Activated naive CD4-positive, alpha-beta T cell treated with anti-CD3 and anti-CD28 coated beads for 36 hours (primary cell): ENCODE measurements at regions of chrX and their contacts with region 1.

Region 1: GRCh38 chrX:14029425-14030173 is at the start of gene GEMIN8:
- DNase-seq: peak; percentile 82
- H3K4me3 Mint-ChIP-seq: peak within 1 kb of the TSS; percentile 98
- H3K27ac Mint-ChIP-seq: peak within 1 kb of the TSS; percentile 99
- H3K4me1 Mint-ChIP-seq: peaks cover 30% of the 10 kb centered on the region
- H3K27me3 Mint-ChIP-seq: no peaks in the 10 kb centered on the region
- total RNA-seq, gene GEMIN8: 4.7 to 5.1 TPM

Region 2: GRCh38 chrX:12843668-12844279 is 1185.8 kb before region 1 on chrX:
- CTCF ChIA-PET with region 1: no interaction called
- intact Hi-C with region 1: loop called (anchors 2 kb)
- DNase-seq: no peak
- H3K4me3 Mint-ChIP-seq: peak overlapping the region; percentile 65
- H3K27ac Mint-ChIP-seq: peak overlapping the region; percentile 93
- H3K4me1 Mint-ChIP-seq: peaks cover 17% of the 10 kb centered on the region
- H3K27me3 Mint-ChIP-seq: no peaks in the 10 kb centered on the region

Region 3: GRCh38 chrX:13087322-13088155 is 942.1 kb before region 1 on chrX:
- CTCF ChIA-PET with region 1: no interaction called
- intact Hi-C with region 1: loop called (anchors 5 kb)
- DNase-seq: peak; percentile 74
- H3K4me3 Mint-ChIP-seq: peak overlapping the region; percentile 79
- H3K27ac Mint-ChIP-seq: peak overlapping the region; percentile 97
- H3K4me1 Mint-ChIP-seq: peaks cover 87% of the 10 kb centered on the region
- H3K27me3 Mint-ChIP-seq: no peaks in the 10 kb centered on the region

Region 4: DNA sequence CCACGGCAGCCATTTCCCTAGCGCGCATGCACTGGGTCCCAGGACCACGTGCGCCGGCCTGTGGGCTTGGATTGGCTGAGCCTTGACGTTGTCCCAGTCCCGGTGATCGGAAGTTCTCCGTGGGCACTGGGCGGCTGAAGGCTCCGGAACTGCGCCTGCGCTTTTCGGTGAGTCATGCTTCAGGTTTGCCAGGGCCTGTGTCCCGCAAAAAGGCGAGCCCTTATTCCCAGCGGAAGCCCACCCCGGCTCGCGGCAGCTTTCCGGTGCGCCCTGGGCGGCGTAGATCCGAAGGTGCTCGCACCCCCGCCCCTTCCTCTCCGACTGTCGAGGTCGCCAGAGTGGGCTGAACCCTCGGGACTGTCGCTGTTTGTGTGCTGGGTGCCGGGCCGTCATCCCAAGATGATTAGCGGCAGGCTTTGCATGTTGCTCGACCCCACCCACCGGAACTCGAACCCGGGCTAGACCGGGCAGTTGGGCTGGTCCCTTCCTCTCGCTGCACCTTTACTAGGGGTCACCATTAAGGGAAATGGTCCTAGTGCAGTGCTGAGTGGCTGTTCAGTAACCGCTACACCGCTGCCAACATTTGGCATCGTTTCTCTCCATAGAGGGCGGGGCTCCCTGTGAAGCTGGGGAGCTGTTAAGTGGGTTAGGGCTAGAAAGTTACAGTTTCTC is 376.4 kb before region 1 on chrX and contains the start of gene TCEANC:
- CTCF ChIA-PET with region 1: no interaction called
- intact Hi-C with region 1: loop called (anchors 1 kb)
- DNase-seq: peak; percentile 95
- H3K4me3 Mint-ChIP-seq: peak within 1 kb of the TSS; percentile 88
- H3K27ac Mint-ChIP-seq: peak within 1 kb of the TSS; percentile 93
- H3K4me1 Mint-ChIP-seq: peaks cover 24% of the 10 kb centered on the region
- H3K27me3 Mint-ChIP-seq: no peaks in the 10 kb centered on the region
- total RNA-seq, gene TCEANC: 2.5 to 2.7 TPM

Region 5: GRCh38 chrX:13734278-13735172 is 295.1 kb before region 1 on chrX and contains the starts of genes OFD1 and TRAPPC2:
- CTCF ChIA-PET with region 1: interaction called, 3 read pairs
- intact Hi-C with region 1: loop called (anchors 1 kb)
- DNase-seq: peak; percentile 92
- H3K4me3 Mint-ChIP-seq: peak within 1 kb of the TSS; percentile 95
- H3K27ac Mint-ChIP-seq: peak within 1 kb of the TSS; percentile 92
- H3K4me1 Mint-ChIP-seq: peaks cover 43% of the 10 kb centered on the region
- H3K27me3 Mint-ChIP-seq: no peaks in the 10 kb centered on the region
- total RNA-seq, gene OFD1: 25.3 to 26.2 TPM
- total RNA-seq, gene TRAPPC2: 9.6 to 10.7 TPM

Region 6: GRCh38 chrX:13938051-13938828 is 91.4 kb before region 1 on chrX:
- CTCF ChIA-PET with region 1: no interaction called
- intact Hi-C with region 1: loop called (anchors 5 kb)
- DNase-seq: peak; percentile 4
- H3K4me3 Mint-ChIP-seq: peak overlapping the region; percentile 27
- H3K27ac Mint-ChIP-seq: no peak overlapping the region
- H3K4me1 Mint-ChIP-seq: no peaks in the 10 kb centered on the region
- H3K27me3 Mint-ChIP-seq: peaks cover 32% of the 10 kb centered on the region

Region 7: GRCh38 chrX:13985697-13986435 is 43.7 kb before region 1 on chrX:
- CTCF ChIA-PET with region 1: no interaction called
- intact Hi-C with region 1: no loop called
- DNase-seq: no peak
- H3K4me3 Mint-ChIP-seq: no peak overlapping the region
- H3K27ac Mint-ChIP-seq: no peak overlapping the region
- H3K4me1 Mint-ChIP-seq: peaks cover 3% of the 10 kb centered on the region
- H3K27me3 Mint-ChIP-seq: no peaks in the 10 kb centered on the region

Region 8: DNA sequence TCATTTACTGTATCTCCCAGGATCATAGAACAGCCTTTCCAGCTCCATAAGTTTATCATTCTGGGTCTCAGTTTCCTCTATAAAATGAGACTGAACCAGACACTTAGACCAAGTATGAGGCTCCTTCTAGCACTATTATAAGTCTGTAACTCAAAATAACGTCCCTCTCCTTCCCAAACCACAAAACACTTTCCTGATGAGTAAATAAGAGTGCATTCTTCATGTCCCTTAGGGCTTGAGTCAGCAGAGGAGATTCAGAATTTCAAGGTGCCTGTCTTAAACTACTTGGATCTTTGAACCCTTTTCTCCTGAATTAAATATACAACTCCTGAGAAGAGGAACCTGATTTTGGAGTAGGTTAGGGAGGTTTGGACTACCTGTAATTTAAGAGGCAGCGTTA is 562.4 kb after region 1 on chrX:
- CTCF ChIA-PET with region 1: no interaction called
- intact Hi-C with region 1: no loop called
- DNase-seq: no peak
- H3K4me3 Mint-ChIP-seq: no peak overlapping the region
- H3K27ac Mint-ChIP-seq: no peak overlapping the region
- H3K4me1 Mint-ChIP-seq: no peaks in the 10 kb centered on the region
- H3K27me3 Mint-ChIP-seq: no peaks in the 10 kb centered on the region

Region 9: DNA sequence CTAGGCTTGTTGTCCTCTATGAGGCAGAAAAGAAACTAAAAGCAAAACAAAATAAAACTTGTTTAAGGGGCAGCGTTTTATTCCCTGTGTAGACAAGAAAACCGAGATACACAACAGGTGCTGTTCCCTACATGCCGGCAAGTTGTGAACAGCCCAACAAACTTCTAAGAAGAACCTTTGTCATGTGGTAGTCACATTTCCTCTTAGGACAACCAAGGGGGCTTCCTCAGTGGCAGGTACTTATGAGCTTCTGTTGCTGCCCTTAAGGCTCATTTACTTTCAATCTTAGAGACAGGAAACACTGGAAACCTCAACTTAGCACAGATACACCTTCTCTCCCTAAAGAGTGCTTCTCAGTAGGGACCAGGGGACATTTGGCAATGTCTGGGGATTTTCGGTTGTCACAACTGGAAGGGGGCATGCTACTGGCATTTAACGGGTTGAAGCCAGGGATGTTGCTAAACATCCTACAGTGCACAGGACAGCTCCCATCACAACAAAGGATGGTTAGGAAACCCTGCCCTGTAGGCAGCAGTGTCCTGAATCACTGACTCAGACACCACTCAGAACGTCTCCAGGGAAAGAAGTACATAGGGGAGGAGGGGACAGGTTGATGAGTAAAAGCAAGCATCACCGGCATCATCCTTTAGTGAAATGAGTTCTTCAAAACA is 1129.3 kb after region 1 on chrX:
- CTCF ChIA-PET with region 1: no interaction called
- intact Hi-C with region 1: loop called (anchors 1 kb)
- DNase-seq: peak; percentile 51
- H3K4me3 Mint-ChIP-seq: peak overlapping the region; percentile 54
- H3K27ac Mint-ChIP-seq: peak overlapping the region; percentile 53
- H3K4me1 Mint-ChIP-seq: peaks cover 35% of the 10 kb centered on the region
- H3K27me3 Mint-ChIP-seq: no peaks in the 10 kb centered on the region